ENCODE measurements at regions of chr2 and their contacts with region 1.

Region 1: DNA sequence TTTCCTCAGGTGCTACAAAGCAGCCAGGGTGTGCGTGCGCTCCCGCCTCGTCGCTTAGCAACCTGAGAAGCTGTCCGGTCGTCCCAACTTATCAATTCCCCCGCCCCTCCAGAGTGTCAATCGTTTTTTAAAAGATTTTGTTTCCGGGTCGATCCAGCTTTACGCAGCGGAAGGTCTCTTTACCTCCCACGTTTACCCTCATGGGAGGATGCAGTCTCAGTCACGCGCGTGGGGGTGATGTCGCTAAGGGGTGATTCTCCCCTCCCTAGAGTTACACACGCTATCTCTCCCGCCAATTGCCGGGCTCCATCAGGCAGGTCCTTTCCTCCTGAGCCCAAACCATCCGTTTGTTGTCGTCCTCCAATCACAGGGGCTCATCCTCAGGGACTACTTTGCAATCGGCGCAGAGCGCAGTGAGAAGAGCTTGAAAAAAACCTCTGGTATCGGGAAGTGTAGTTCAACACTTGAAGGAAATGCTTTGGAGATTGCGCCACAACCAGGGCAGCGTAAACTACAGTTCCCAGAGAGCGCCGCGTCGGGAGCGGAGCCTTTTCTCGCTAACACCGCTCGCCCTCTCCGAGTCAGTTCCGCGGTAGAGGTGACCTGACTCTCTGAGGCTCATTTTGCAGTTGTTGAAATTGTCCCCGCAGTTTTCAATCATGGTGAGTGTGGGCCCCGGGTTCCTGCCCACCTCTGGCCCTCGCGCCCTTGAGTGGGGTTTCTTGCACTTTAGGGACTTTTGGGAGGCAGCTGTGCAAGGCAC is at the starts of genes MDH1 and WDPCP:
- DNase-seq: peak; percentile 91 to 94
- H3K4me3 ChIP-seq: peak within 1 kb of the TSS; percentile 87 to 98 (median 94)
- H3K27ac ChIP-seq: peak within 1 kb of the TSS; percentile 80
- H3K4me1 ChIP-seq: peaks cover 2 to 6% (median 4%) of the 10 kb centered on the region in 4 experiments; a peak in 5 of 7 replicates
- H3K27me3 ChIP-seq: no peaks in the 10 kb centered on the region
- CTCF ChIP-seq: no peak
- EP300 ChIP-seq: 0 out of 3 replicates have a peak, but pooled peaks of 1 of the 2 experiments have one; percentile 41
- POLR2A ChIP-seq: peak; percentile 75 to 82
- RAD21 ChIP-seq: no peak; a peak in 1 of 4 replicates
- total RNA-seq, gene MDH1: 335 and 353 TPM in 2 replicates
- total RNA-seq, gene WDPCP: 23.0 and 25.8 TPM in 2 replicates

Region 2: DNA sequence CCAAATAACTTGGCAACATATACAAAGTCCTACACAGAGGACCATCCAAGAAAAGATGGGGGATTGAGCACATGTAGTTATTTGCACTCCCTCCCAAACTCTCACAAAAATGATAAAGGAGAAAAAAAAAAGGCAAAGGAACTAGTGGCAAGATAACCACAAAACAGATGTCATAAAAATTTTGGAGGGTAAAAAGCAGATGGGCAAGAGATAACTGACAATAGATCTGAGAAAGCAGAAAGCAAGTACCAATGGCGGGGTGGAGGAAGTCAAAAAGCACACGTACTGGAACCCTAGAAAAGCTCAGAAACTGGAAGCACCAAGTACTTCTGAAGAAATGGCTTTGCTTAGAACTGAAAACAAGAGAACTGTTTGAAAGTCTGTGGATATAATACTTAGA is 82.2 kb before region 1 on chr2:
- CTCF ChIA-PET with region 1: no interaction called
- POLR2A ChIA-PET with region 1: no interaction called
- DNase-seq: no peak
- H3K4me3 ChIP-seq: no peak overlapping the region
- H3K27ac ChIP-seq: no peak overlapping the region
- H3K4me1 ChIP-seq: 0 out of 7 replicates have a peak, but pooled peaks cover 0 to 5% (median 1%) of the 10 kb centered on the region in 4 experiments
- H3K27me3 ChIP-seq: no peaks in the 10 kb centered on the region
- CTCF ChIP-seq: no peak
- EP300 ChIP-seq: no peak
- POLR2A ChIP-seq: no peak
- RAD21 ChIP-seq: no peak

Region 3: DNA sequence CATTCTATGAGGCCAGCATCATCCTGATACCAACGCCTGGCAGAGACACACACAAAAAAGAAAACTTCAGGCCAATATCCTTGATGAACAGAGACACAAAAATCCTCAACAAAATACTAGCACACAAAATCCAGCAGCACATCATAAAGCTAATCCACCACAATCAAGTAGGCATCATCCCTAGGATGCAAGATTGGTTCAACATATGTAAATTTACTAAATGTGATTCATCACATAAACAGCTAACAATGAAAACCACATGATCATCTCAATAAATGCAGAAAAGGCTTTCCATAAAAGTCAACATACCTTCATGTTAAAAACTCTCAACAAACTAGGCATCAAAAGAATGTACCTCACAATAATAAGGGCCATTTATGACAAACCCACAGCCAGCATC is 65.6 kb before region 1 on chr2:
- CTCF ChIA-PET with region 1: no interaction called
- POLR2A ChIA-PET with region 1: no interaction called
- DNase-seq: no peak
- H3K4me3 ChIP-seq: no peak overlapping the region
- H3K27ac ChIP-seq: no peak overlapping the region
- H3K4me1 ChIP-seq: no peaks in the 10 kb centered on the region
- H3K27me3 ChIP-seq: no peaks in the 10 kb centered on the region
- CTCF ChIP-seq: no peak
- EP300 ChIP-seq: no peak
- POLR2A ChIP-seq: no peak
- RAD21 ChIP-seq: no peak

Region 4: GRCh38 chr2:63569740-63570139 is 18.8 kb before region 1 on chr2:
- CTCF ChIA-PET with region 1: interaction called, 3 read pairs
- POLR2A ChIA-PET with region 1: interaction called, 10 read pairs
- DNase-seq: no peak
- H3K4me3 ChIP-seq: no peak overlapping the region
- H3K27ac ChIP-seq: no peak overlapping the region
- H3K4me1 ChIP-seq: peaks cover 0 to 8% (median 4%) of the 10 kb centered on the region in 4 experiments; a peak in 5 of 7 replicates
- H3K27me3 ChIP-seq: no peaks in the 10 kb centered on the region
- CTCF ChIP-seq: no peak
- EP300 ChIP-seq: no peak
- POLR2A ChIP-seq: no peak
- RAD21 ChIP-seq: no peak

Region 5: DNA sequence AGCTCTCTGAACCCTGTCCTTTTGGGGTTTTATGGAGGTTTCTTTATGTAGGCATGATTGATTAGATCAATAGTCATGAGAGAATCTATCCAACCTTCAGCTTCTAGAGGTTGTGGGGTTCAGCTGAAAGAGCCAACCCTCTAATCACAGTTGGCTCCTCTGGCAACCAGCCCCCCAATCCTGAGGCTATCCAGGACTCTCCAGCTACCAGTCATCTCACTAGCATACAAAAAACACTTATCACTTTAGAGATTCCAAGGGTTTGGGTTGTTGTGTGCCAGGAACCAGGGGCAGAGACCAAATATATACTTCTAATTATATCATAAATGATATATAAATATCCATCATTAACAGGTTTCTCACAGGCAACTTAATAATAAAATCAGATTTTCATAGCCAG is 12.0 kb before region 1 on chr2:
- CTCF ChIA-PET with region 1: interaction called, 3 read pairs
- POLR2A ChIA-PET with region 1: interaction called, 13 read pairs
- DNase-seq: no peak
- H3K4me3 ChIP-seq: no peak overlapping the region
- H3K27ac ChIP-seq: no peak overlapping the region
- H3K4me1 ChIP-seq: peaks cover 0 to 12% (median 7%) of the 10 kb centered on the region in 4 experiments; a peak in 4 of 7 replicates
- H3K27me3 ChIP-seq: no peaks in the 10 kb centered on the region
- CTCF ChIP-seq: no peak
- EP300 ChIP-seq: no peak
- POLR2A ChIP-seq: no peak
- RAD21 ChIP-seq: no peak

Region 6: DNA sequence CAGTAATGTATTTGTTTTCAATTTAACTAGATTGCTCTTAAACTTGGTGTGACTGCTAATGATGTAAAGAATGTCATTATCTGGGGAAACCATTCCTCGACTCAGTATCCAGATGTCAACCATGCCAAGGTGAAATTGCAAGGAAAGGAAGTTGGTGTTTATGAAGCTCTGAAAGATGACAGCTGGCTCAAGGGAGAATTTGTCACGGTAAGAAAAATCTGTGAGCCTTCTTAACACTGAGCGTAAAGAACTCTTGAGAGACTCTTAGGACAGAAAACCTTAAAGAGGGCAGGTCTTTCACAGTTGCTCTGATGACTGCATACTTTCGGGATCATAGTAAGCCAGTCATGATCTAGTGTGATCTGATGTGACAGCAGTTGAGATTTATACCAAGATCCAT is 16.1 kb after region 1 on chr2:
- CTCF ChIA-PET with region 1: interaction called, 4 read pairs
- POLR2A ChIA-PET with region 1: interaction called, 45 read pairs
- DNase-seq: no peak
- H3K4me3 ChIP-seq: no peak overlapping the region
- H3K27ac ChIP-seq: no peak overlapping the region
- H3K4me1 ChIP-seq: peaks cover 0 to 3% (median 0%) of the 10 kb centered on the region in 4 experiments; a peak in 1 of 7 replicates
- H3K27me3 ChIP-seq: no peaks in the 10 kb centered on the region
- CTCF ChIP-seq: no peak
- EP300 ChIP-seq: no peak
- POLR2A ChIP-seq: peak in 1 of 2 experiments; percentile 13; a peak in 1 of 3 replicates
- RAD21 ChIP-seq: no peak

Region 7: DNA sequence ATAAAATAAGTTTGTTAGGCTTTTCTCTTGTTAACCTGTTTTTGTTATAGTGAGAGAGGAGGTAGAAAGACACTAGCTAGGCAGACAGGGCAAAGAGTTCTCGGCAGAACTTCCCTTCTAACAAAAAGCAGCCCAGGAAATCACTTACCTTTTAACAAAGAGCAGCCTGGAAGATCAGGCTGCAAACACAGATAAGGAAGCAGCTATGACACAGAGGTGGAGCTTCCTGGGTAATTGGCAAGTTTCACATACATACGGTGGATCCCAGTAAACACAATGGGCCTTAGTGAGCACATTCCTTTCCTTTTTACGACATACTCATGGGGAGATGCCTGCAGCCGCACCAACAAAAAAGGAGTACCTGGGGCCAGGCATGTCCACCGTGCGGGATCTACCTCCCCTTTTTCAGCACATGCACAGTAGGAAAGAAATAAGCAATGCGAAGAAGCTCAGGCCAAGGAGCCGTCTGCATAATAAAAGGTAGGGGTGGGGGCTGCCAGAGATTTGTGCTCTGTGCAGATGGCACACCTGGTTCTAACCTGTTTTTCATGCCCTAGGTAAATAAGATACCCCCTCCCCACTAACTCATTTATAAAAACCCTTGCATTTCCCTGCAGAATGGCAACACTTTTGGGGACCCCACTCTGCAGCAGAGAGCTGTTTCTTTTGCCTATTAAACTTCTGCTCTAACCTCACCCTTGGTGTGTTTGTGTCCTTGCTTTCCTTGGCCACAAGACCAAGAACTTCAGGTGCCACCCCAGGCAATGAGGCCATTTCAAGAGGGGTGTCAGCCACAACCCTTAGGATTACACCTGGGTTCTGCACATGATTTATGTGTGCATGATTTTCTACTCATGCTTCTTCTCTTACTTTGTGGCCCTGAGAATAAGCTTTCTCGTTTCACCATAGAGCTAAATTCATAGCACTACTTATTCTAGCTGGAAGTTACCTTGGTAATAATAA is 26.7 kb after region 1 on chr2:
- CTCF ChIA-PET with region 1: interaction called, 4 read pairs
- POLR2A ChIA-PET with region 1: interaction called, 10 read pairs
- DNase-seq: peak; percentile 57 to 70
- H3K4me3 ChIP-seq: peak overlapping the region; percentile 24 to 58 (median 33); a peak in 7 of 8 replicates
- H3K27ac ChIP-seq: peak overlapping the region; percentile 95
- H3K4me1 ChIP-seq: peaks cover 9 to 40% (median 21%) of the 10 kb centered on the region in 4 experiments
- H3K27me3 ChIP-seq: no peaks in the 10 kb centered on the region
- CTCF ChIP-seq: no peak
- EP300 ChIP-seq: peak in 1 of 2 experiments; percentile 81; a peak in 1 of 3 replicates
- POLR2A ChIP-seq: peak; percentile 13 to 81
- RAD21 ChIP-seq: no peak; a peak in 1 of 4 replicates

Region 8: DNA sequence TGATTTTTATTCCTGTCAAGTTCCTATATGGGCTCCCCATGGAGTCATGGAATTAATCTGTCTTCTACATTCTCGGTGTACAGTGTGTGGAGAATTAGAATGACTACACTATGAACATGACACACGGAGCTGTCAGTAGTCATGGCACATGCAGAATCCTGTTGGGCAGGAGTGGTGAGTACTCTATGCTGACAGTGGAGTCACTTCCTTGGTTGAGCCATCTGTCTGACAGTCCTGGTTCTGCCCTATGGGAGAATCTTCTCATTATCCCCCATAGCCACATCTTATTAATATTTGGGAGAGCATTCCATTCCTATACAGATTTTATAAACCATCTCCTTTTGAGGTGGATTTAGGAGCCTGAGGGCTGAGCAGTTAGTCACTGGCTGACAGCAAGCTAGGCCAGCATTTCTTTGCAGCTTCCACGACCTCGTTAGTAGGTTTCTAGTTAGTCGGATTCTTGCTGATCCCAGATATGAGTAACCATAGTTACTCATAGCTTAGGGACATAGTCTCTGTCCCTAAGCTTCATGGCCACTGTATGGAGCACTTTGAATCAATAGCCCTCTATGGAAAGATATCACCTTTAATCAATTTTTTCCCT is 90.8 kb after region 1 on chr2:
- CTCF ChIA-PET with region 1: no interaction called
- POLR2A ChIA-PET with region 1: no interaction called
- DNase-seq: no peak
- H3K4me3 ChIP-seq: no peak overlapping the region
- H3K27ac ChIP-seq: no peak overlapping the region
- H3K4me1 ChIP-seq: peaks cover 0 to 6% (median 2%) of the 10 kb centered on the region in 4 experiments; a peak in 3 of 7 replicates
- H3K27me3 ChIP-seq: peaks cover 0 to 1% (median 0%) of the 10 kb centered on the region in 4 experiments; a peak in 1 of 7 replicates
- CTCF ChIP-seq: no peak
- EP300 ChIP-seq: no peak
- POLR2A ChIP-seq: no peak
- RAD21 ChIP-seq: no peak

Region 9: GRCh38 chr2:63849381-63850203 is 261.0 kb after region 1 on chr2:
- CTCF ChIA-PET with region 1: no interaction called
- POLR2A ChIA-PET with region 1: interaction called, 14 read pairs
- DNase-seq: peak in 1 of 2 experiments; percentile 58
- H3K4me3 ChIP-seq: peak overlapping the region in 3 of 4 experiments; percentile 14 to 60 (median 33); a peak in 5 of 8 replicates
- H3K27ac ChIP-seq: peak overlapping the region; percentile 76
- H3K4me1 ChIP-seq: peaks cover 18 to 60% (median 26%) of the 10 kb centered on the region in 4 experiments
- H3K27me3 ChIP-seq: no peaks in the 10 kb centered on the region
- CTCF ChIP-seq: no peak
- EP300 ChIP-seq: no peak
- POLR2A ChIP-seq: peak; percentile 25 to 79
- RAD21 ChIP-seq: no peak; a peak in 1 of 4 replicates

Measured in H1 (cell line).